ENCODE measurements at regions of chr3 and their contacts with region 1.

Region 1: DNA sequence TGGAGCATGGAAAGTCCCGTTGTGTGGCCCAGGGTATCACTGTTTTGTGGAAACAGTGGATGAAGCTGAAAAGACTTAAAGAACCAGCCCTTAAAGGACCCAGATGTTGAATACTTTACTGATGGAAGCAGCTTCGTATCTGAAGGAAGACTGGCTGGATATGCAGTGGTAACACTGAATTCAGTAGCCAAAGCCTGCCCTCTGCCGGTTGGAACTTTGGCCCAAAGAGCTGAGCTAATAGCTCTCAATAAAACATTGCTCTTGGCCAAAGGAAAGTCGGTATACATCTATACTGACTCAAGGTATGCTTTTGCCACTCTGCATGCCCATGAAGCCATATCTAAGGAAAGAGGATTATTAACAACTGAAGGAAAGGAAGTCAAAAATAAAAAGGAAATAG is 885.4 kb downstream of the PDCD6IP start:
- DNase-seq: no peak
- H3K4me3 ChIP-seq: no peak overlapping the region
- CTCF ChIP-seq: peak; percentile 41

Region 2: DNA sequence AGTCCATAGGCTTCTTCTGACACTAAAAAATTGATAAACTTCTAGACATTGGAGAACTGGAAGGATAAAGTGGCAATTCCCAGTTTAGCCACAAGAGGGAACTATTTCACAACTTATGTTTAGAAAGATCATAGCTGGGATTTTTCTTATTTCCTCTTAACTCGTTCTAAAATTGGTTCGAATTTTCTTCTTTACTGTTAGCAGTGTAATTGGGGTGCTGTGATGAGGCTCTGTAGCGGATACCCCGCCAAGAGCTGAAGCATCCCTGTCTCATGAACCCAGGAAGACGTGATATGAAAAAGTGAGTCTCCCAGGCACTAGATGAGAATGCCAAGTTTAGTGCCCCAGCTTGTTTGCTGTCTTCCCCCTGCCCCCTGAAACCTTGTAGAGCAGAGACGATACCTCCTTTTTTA is 800.3 kb before region 1 on chr3:
- CTCF ChIA-PET with region 1: interaction called, 165 read pairs
- POLR2A ChIA-PET with region 1: no interaction called
- DNase-seq: no peak
- H3K4me3 ChIP-seq: no peak overlapping the region
- CTCF ChIP-seq: peak; percentile 56

Region 3: GRCh38 chr3:33915791-33916546 is 767.9 kb before region 1 on chr3:
- CTCF ChIA-PET with region 1: interaction called, 13 read pairs
- POLR2A ChIA-PET with region 1: no interaction called
- DNase-seq: no peak
- H3K4me3 ChIP-seq: no peak overlapping the region
- CTCF ChIP-seq: peak; percentile 44

Region 4: GRCh38 chr3:33980252-33980651 is 703.6 kb before region 1 on chr3:
- CTCF ChIA-PET with region 1: interaction called, 45 read pairs
- POLR2A ChIA-PET with region 1: no interaction called
- DNase-seq: peak; percentile 84
- H3K4me3 ChIP-seq: no peak overlapping the region
- CTCF ChIP-seq: peak; percentile 75

Region 5: GRCh38 chr3:34106879-34107278 is 577.0 kb before region 1 on chr3:
- CTCF ChIA-PET with region 1: interaction called, 12 read pairs
- POLR2A ChIA-PET with region 1: no interaction called
- DNase-seq: no peak
- H3K4me3 ChIP-seq: no peak overlapping the region
- CTCF ChIP-seq: peak; percentile 50

Region 6: GRCh38 chr3:34405159-34405558 is 278.7 kb before region 1 on chr3:
- CTCF ChIA-PET with region 1: no interaction called
- POLR2A ChIA-PET with region 1: no interaction called
- DNase-seq: no peak
- H3K4me3 ChIP-seq: no peak overlapping the region
- CTCF ChIP-seq: no peak

Region 7: DNA sequence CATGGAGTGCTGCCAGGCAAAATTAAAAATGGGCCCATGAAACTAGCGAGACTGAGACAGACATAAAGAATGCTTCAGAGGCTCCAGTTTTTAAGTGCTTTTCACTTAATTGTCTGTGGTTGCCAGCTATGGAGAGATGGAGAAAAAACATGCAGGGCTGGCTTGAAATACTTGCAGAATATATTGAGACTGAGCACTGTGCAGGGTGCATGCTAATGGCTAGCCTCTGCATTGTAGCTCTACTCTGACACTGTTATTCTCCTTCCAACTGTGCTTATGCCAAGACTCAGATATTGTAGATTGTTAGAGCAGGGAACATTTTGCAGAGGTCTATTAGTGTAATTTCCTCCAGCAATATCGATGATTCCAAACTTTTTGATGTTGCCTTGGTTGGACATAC is 150.4 kb before region 1 on chr3:
- CTCF ChIA-PET with region 1: no interaction called
- POLR2A ChIA-PET with region 1: no interaction called
- DNase-seq: no peak
- H3K4me3 ChIP-seq: no peak overlapping the region
- CTCF ChIP-seq: no peak

Region 8: GRCh38 chr3:34650131-34650530 is 33.7 kb before region 1 on chr3:
- CTCF ChIA-PET with region 1: no interaction called
- POLR2A ChIA-PET with region 1: no interaction called
- DNase-seq: no peak
- H3K4me3 ChIP-seq: no peak overlapping the region
- CTCF ChIP-seq: no peak

Measured in AG04449 (cell line).